Sigmoid colon (tissue), 7 donors: ENCODE measurements at regions of chr12 and their contacts with region 1.

Region 1: DNA sequence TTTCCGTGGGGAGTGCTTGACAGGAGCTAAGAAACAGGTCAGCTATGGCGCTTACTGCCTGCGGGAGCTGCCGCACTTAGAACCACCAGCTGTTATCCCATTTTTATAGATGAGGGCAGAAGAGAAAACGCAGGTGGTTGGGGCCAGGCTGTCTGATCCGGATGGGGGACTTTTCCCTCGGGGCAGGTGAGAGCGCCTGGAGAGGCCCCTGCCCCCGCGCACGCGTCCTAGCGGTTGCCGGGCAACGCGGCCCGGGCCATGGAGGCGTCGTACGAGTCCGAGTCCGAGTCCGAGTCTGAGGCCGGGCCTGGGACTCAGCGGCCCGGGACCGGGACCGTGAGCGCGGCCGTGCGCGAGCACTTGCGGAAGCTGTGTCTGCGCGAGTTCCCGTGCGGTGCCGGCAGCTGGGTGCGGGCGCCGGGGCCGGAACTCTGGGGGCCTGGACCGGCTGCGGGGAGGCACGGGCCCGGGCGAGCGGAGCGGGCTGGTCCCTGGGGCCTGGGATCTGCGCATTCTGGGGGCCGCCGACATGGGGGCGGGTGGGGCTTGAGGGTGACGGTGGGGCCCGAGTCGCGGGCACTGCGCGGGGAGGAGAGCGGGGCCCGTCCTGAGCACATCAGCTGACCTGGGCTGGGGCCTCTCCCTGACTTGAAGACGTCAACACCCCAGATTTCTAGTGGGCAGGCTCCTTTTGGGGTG is at the start of gene LRRC43:
- DNase-seq: no peak
- H3K4me3 ChIP-seq: peak within 1 kb of the TSS; percentile 25 to 63 (median 52)
- H3K27ac ChIP-seq: peak within 1 kb of the TSS in 1 of 4 donors; percentile 22
- H3K4me1 ChIP-seq: peaks cover 0 to 11% (median 5%) of the 10 kb centered on the region in 4 donors
- H3K27me3 ChIP-seq: no peaks in the 10 kb centered on the region
- CTCF ChIP-seq: no peak
- EP300 ChIP-seq: no peak
- POLR2A ChIP-seq: no peak
- total RNA-seq, gene LRRC43: 0.54 to 4.4 (median 1.9) TPM in 3 of 4 donors, not detected in the other

Region 2: DNA sequence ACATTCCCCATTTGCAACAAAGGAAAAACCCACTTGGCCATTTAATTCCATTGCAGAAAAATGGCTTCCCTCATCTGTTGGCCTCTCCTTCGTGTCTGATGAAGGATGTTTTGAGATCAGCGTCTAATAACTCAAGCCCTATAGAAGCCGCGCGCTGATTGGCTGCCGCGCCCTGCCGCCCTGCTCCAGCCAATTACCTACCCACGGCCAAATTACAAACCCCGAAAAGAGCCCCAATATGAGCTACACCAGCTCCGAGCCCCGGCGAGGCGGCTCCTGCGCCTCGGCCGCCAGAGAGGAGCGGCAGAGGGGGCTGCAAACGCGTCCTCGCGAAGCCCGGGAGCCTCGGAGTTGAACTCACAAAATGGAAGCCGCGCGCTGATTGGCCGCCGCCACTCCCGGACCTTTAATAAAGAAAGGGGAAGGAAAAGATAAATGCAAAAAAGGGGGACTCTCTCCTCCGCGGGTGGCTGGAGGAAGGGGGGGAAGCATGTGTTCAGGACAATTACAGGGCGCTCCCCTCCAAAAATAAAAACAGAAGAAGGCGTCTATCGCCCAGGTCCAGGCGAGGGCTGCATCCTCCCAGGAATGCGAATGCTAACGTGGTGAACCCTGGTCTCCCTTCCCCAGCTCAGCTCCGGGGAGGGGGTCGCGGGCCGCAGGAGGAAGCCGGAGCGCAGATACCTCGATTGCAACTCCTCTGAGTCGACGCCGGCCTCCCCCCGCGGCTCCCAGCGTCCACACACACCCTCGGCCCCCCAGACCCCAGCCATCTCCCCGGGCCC is 380.0 kb before region 1 on chr12:
- intact Hi-C with region 1: no loop called
- DNase-seq: peak; percentile 96
- H3K4me3 ChIP-seq: peak overlapping the region; percentile 63 to 81 (median 78)
- H3K27ac ChIP-seq: peak overlapping the region; percentile 100
- H3K4me1 ChIP-seq: peaks cover 0 to 50% (median 46%) of the 10 kb centered on the region in 4 donors
- H3K27me3 ChIP-seq: no peaks in the 10 kb centered on the region
- CTCF ChIP-seq: no peak
- EP300 ChIP-seq: no peak
- POLR2A ChIP-seq: peak; percentile 97 to 99

Region 3: GRCh38 chr12:122031342-122032216 is 151.5 kb before region 1 on chr12:
- intact Hi-C with region 1: loop called (anchors 10 kb)
- DNase-seq: no peak
- H3K4me3 ChIP-seq: no peak overlapping the region
- H3K27ac ChIP-seq: no peak overlapping the region
- H3K4me1 ChIP-seq: peaks cover 0 to 5% (median 0%) of the 10 kb centered on the region in 4 donors
- H3K27me3 ChIP-seq: no peaks in the 10 kb centered on the region
- CTCF ChIP-seq: peak; percentile 46 to 73 (median 68)
- EP300 ChIP-seq: no peak
- POLR2A ChIP-seq: no peak